Heart right ventricle (tissue), 16 donors: ENCODE measurements at regions of chr11 and their contacts with region 1.

Region 1: DNA sequence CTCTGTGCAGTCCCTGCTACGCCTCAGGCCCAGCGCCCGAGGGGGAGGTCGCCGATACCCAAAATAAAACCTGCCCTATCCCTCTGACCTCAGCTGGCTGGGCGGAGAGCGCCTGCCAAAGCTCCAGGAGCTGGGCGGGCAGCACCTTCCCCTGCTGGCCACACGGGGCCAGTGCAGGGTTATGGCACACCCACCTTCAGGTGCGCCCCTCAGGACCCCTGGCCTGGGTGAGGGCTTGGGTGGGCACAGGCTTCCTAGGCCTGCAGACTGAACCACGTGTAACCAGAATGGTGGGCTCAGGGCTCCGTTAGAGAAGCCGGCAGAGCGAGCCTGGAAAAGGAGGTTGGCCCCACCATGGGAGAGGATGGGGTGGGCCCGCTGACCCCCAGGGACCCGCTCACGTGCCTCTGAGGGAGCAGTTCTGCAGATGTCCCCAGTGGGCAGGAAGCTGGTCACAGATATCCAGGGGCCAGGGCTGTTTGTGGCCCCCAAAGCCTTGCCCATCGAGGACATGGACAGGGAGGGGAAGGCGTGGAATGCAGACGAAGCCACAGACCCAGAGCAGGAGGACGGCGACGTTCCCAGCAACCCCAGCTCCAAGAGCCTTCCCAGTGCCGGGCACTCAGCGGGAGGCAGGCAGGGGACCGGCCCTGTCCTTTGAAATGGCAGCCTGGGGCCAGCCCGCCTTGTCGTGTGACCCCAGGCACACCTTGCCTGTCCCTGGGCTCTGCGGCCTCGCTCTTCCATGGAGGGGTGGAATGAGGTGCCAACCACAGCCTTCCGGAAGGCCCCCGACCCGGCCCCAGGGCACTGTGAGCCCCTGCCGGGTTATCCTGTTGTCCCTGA is 1.6 kb upstream of the TNNT3 start:
- DNase-seq: peak in 1 of 2 donors; percentile 69
- ATAC-seq: peak; percentile 5 to 69 (median 56)
- H3K4me3 ChIP-seq: peak overlapping the region in 8 of 10 donors; percentile 3 to 32 (median 22)
- H3K27ac ChIP-seq: peak overlapping the region; percentile 40 to 94 (median 81)
- H3K4me1 ChIP-seq: peaks cover 25 to 71% (median 56%) of the 10 kb centered on the region in 9 donors
- H3K27me3 ChIP-seq: no peaks in the 10 kb centered on the region
- CTCF ChIP-seq: peak; percentile 46 to 73 (median 67)

Region 2: DNA sequence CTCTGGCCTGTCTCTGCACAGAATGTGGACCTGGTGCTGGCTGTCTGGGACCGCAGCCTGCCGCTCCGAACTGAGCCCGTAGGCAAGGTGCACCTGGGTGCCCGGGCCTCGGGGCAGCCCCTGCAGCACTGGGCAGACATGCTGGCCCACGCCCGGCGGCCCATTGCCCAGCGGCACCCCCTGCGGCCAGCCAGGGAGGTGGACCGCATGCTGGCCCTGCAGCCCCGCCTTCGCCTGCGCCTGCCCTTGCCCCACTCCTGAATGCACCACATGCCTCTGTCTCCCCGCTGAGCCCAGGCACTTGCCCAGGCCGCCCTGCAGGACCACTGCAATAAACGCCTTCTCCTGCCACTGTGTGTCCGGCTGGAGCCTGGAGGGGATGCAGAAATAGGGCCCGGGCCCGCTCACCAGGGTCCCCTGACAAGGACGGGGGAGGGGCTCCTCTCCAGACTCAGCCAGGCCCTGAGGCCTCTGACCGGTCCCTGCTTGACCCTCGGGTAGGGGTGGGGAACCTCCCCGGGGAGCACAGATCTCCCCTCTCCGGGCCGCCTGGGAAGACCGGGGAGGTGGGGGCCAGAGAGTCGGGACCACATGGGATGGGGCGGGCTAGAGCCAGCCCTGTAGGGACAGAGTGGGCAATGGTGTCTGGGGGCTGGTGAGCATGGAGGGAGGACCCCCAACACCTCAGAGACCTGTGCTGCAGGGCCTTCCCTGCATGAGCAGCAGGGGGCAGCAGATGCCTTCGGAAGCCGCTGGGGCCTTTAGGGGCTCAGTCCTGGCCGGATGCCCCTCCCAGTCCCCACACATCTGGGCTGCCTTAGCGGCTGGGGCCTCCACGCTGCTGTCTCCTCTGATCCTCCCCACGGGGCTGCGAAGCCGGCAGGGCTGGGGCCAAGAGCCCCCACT is 80.5 kb before region 1 on chr11:
- intact Hi-C with region 1: no loop called
- DNase-seq: peak; percentile 71 to 78
- ATAC-seq: peak; percentile 29 to 71 (median 58)
- H3K4me3 ChIP-seq: no peak overlapping the region
- H3K27ac ChIP-seq: peak overlapping the region in 2 of 10 donors; percentile 34 to 60
- H3K4me1 ChIP-seq: peaks cover 6 to 41% (median 25%) of the 10 kb centered on the region in 9 donors
- H3K27me3 ChIP-seq: no peaks in the 10 kb centered on the region
- CTCF ChIP-seq: peak; percentile 89 to 97 (median 92)

Region 3: DNA sequence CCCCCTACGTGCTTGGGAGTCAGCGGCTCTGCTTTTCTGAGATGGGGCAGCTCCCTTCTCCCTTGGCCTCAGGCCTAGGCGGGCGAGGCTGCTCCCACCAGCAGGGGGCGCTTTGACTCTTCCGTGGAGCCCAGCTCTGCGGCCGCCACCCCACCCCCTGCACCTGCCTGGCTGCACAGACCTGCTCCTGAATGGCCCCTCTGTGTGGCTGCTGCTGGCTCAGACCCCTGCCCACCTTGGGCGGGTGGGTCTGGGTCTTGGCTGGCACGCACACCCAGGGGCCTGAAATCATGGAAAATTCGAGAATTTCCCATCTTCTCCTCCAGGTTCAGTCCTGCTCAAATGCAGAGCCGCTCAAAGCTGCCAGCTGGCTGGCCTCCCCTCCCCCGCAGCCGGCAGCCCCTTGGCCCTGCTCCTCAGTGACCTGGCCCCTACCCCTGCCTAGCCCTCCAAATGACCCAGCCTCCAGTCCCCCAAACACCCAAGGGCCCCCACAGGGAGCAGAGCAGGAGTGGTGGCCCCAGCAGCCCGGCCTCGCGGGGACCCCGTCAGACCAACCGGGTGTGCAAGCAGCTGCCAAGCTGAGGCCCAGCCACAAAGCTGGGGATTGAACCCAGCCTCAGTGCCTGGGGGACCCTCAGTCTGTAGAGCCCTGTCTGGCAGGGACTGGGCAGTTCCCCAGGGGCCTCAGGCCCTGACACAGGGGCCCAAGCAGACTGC is 35.2 kb before region 1 on chr11:
- intact Hi-C with region 1: loop called in 7 of 10 experiments (anchors 2 to 5 kb)
- DNase-seq: peak; percentile 86 to 91
- ATAC-seq: peak; percentile 72 to 88 (median 84)
- H3K4me3 ChIP-seq: no peak overlapping the region
- H3K27ac ChIP-seq: peak overlapping the region; percentile 88 to 100 (median 96)
- H3K4me1 ChIP-seq: peaks cover 32 to 57% (median 46%) of the 10 kb centered on the region in 9 donors
- H3K27me3 ChIP-seq: no peaks in the 10 kb centered on the region
- CTCF ChIP-seq: peak; percentile 87 to 96 (median 94)

Region 4: DNA sequence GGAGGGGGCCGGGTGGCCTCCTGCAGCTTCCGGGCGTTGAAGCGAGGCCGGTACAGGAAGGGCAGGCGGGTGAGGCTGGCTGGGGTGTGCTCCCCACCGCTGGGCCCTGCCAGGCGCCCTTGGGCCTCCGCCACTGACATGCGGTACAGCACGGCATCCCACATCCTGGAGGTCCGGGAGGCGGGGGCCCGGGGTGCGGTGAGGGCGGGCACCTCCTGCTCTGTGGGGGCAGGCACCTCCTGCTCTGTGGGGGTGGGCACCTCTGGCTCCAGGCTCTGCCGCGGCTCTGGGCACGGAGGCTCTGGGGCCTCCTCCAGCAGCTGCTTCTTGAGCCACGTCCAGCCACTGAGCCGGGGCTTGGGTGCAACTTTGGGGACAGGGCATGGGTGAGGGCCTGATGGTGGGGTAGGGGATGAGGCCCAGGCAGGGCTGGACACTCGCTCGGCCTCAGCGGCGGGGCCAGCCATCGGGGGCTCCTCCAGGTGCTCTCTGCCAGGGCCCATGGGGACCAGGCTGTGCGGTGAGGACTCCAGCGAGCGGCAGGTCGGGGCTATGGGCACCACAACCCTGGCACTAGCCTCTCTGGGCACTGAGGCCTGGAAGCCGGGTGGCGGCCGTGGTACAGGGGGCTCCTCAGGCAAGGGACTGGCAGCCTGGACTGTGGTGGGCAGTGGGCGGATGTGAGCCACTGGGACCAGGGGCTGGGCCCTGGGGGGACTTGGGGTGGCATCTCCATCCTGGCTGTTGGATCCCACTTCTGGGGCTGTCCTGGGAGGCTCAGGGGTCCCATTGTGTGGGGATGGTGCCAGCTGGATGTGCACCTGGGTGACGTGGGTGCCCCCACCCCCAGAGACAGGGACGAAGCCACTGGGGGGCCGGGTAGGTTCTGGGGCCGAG is 28.4 kb before region 1 on chr11:
- intact Hi-C with region 1: loop called (anchors 1 kb)
- DNase-seq: peak in 1 of 2 donors; percentile 50
- ATAC-seq: peak in 5 of 8 donors; percentile 2 to 38 (median 19)
- H3K4me3 ChIP-seq: peak overlapping the region in 1 of 10 donors; percentile 12
- H3K27ac ChIP-seq: peak overlapping the region in 3 of 10 donors; percentile 23 to 68 (median 48)
- H3K4me1 ChIP-seq: peaks cover 0 to 43% (median 6%) of the 10 kb centered on the region in 9 donors
- H3K27me3 ChIP-seq: peaks cover 0 to 4% (median 0%) of the 10 kb centered on the region in 7 donors
- CTCF ChIP-seq: no peak

Region 5: GRCh38 chr11:1931341-1932099 is 13.6 kb after region 1 on chr11:
- intact Hi-C with region 1: loop called in 4 of 10 experiments (anchors 1 to 2 kb)
- DNase-seq: peak in 1 of 2 donors; percentile 58
- ATAC-seq: peak in 7 of 8 donors; percentile 22 to 36 (median 27)
- H3K4me3 ChIP-seq: no peak overlapping the region
- H3K27ac ChIP-seq: peak overlapping the region; percentile 17 to 79 (median 64)
- H3K4me1 ChIP-seq: peaks cover 5 to 46% (median 19%) of the 10 kb centered on the region in 9 donors
- H3K27me3 ChIP-seq: no peaks in the 10 kb centered on the region
- CTCF ChIP-seq: no peak

Region 6: DNA sequence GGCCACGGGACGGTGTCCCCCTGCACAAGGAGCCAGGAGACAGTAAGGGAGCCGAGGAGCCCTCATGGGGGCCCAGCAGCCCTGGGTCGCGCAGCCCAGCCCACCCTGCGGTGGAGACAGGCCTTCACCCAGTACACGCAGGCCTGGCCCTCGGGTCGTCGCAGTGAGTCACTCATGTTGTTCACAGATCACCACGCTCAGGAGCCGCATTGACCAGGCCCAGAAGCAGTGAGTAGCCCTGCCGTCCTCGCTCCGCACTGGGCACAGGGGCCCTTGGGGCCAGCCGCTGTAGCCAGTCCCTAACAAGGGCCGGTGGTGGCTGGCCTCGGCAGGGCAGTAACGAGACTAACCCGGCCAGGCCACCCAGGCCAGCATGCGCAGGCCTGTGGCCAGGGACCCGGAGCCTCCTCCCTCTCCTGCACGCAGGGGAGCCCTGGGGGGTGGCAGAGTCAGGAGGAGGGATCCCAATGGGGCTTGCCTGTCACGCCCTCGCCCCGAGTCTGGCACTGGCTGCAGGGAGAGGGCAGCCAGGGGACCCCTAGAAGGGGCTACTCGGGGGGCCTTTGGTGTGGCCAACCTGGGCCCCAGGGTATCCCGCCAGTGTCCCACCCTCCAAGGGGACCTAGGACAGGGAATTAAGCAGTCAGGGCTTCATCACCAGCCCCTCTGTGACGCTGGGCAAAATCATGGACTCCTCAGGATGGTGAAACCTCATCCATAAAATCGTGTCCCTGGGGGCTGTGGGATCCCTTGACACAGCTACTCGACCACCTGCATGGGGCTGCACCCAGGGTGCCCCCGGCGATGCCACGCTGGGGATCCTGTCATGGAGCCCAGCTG is 19.1 kb after region 1 on chr11:
- intact Hi-C with region 1: loop called in 6 of 10 experiments (anchors 1 to 2 kb)
- DNase-seq: peak in 1 of 2 donors; percentile 11
- ATAC-seq: peak in 1 of 8 donors; percentile 10
- H3K4me3 ChIP-seq: no peak overlapping the region
- H3K27ac ChIP-seq: peak overlapping the region in 1 of 10 donors; percentile 26
- H3K4me1 ChIP-seq: peaks cover 4 to 18% (median 14%) of the 10 kb centered on the region in 9 donors
- H3K27me3 ChIP-seq: no peaks in the 10 kb centered on the region
- CTCF ChIP-seq: no peak

Region 7: GRCh38 chr11:1943977-1944376 is 26.1 kb after region 1 on chr11:
- intact Hi-C with region 1: loop called in 1 of 10 experiments (anchors 1 kb)
- DNase-seq: no peak
- ATAC-seq: no peak
- H3K4me3 ChIP-seq: no peak overlapping the region
- H3K27ac ChIP-seq: peak overlapping the region in 7 of 10 donors; percentile 6 to 55 (median 35)
- H3K4me1 ChIP-seq: peaks cover 0 to 19% (median 7%) of the 10 kb centered on the region in 9 donors
- H3K27me3 ChIP-seq: no peaks in the 10 kb centered on the region
- CTCF ChIP-seq: no peak